ENCODE measurements at regions of chr17 and their contacts with region 1.

Region 1: DNA sequence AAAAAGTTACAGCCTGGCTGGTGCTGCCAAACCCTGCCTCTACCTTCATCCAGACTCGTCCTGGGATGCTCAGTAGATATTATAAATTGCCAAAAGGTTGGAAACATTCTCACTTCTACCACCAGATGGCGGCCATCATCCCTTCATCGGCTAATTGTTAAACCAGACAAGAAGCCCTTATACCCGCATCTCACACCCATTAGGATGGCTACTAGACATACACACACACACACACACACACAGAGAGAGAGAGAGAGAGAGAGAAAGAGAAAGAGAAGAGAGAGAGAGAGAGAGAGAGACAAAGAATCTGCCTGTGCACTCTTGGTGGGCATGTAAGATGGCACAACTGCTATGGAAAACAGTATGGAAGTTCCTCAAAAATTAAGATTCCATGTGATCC is 15.0 kb upstream of the SCIMP start:
- DNase-seq: peak; percentile 65 to 73 (median 67)
- H3K4me3 ChIP-seq: no peak overlapping the region
- H3K4me3 Mint-ChIP-seq: peak overlapping the region in 1 of 8 donors; percentile 8
- H3K27ac ChIP-seq: no peak overlapping the region
- H3K27ac Mint-ChIP-seq: peak overlapping the region in 3 of 7 donors; percentile 64 to 94 (median 71)
- H3K4me1 ChIP-seq: peaks cover 7% of the 10 kb centered on the region
- H3K4me1 Mint-ChIP-seq: peaks cover 5 to 8% (median 6%) of the 10 kb centered on the region in 4 donors
- H3K27me3 ChIP-seq: no peaks in the 10 kb centered on the region
- H3K27me3 Mint-ChIP-seq: peaks cover 2% of the 10 kb centered on the region in 2 donors

Region 2: DNA sequence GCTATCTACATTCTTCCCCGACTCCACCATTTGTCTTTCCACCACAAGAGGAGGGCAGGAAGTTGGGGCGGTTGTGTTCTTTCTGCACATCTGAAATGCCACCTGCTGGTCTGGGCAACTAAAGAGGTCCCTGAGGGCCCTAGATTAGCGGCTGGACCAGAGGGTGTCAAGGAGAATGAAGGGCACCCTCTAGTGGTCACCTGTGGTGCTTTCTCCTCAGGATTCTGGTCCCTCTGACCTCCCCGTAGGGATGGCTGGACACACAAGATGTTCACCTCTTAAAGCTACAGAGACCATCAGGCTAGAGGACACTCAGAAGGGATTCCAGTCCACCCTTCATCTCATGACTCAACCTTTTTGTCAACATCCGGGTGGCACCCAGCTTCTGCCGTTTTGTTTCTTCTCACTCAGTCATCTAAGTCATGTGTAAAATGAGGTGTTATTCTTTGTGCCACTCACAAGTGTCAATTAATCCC is 12.0 kb before region 1 on chr17:
- CTCF ChIA-PET with region 1: interaction called, 13 read pairs
- POLR2A ChIA-PET with region 1: interaction called, 3 read pairs
- intact Hi-C with region 1: no loop called
- DNase-seq: peak in 1 of 5 donors; percentile 14
- H3K4me3 ChIP-seq: no peak overlapping the region
- H3K4me3 Mint-ChIP-seq: peak overlapping the region in 1 of 8 donors; percentile 5
- H3K27ac ChIP-seq: no peak overlapping the region
- H3K27ac Mint-ChIP-seq: peak overlapping the region in 5 of 7 donors; percentile 1 to 64 (median 46)
- H3K4me1 ChIP-seq: peaks cover 25% of the 10 kb centered on the region
- H3K4me1 Mint-ChIP-seq: peaks cover 12 to 38% (median 28%) of the 10 kb centered on the region in 4 donors
- H3K27me3 ChIP-seq: no peaks in the 10 kb centered on the region
- H3K27me3 Mint-ChIP-seq: no peaks in the 10 kb centered on the region

Region 3: GRCh38 chr17:5304636-5305035 is 55.0 kb after region 1 on chr17:
- CTCF ChIA-PET with region 1: interaction called, 7 read pairs
- POLR2A ChIA-PET with region 1: no interaction called
- intact Hi-C with region 1: loop called (anchors 1 kb)
- DNase-seq: no peak
- H3K4me3 ChIP-seq: no peak overlapping the region
- H3K4me3 Mint-ChIP-seq: no peak overlapping the region
- H3K27ac ChIP-seq: no peak overlapping the region
- H3K27ac Mint-ChIP-seq: no peak overlapping the region
- H3K4me1 ChIP-seq: peaks cover 12% of the 10 kb centered on the region
- H3K4me1 Mint-ChIP-seq: peaks cover 25 to 47% (median 33%) of the 10 kb centered on the region in 4 donors
- H3K27me3 ChIP-seq: no peaks in the 10 kb centered on the region
- H3K27me3 Mint-ChIP-seq: no peaks in the 10 kb centered on the region

Region 4: DNA sequence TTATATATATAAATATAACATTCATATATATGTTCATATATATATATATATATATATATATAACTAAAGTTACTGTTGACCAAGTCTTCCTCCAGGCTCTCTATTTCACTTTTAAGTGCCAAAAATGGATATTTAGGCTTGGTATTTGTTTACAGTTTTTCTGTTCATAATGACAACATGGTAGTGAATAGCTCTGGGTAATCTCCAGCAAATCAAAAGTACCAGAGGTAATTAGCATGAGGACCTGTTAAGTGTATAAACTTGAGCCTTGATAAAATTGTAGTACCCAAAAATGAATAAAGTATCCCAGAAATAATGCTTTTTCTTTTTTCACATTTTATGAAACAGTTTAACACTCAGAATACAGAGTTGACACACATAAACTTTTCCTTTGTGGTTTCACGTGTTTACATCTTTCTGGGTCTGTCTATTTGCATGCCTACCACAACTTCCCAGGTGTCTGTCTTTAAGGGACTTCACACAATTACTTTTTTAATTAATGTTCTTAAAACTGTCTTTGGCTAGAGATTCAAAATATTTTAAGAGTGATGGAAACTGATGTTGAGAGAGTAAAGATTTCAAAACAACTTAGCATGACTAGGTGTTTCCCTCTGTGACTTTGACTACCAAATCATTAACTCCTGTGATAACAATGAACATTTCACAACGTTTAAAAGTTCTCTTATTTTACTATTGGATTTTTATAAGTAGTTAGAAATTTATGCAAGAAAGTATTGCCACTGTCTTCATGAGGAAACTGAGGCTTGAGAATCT is 80.4 kb after region 1 on chr17:
- CTCF ChIA-PET with region 1: no interaction called
- POLR2A ChIA-PET with region 1: no interaction called
- intact Hi-C with region 1: no loop called
- DNase-seq: peak in 4 of 5 donors; percentile 5 to 22 (median 10)
- H3K4me3 ChIP-seq: no peak overlapping the region
- H3K4me3 Mint-ChIP-seq: peak overlapping the region in 5 of 8 donors; percentile 36 to 56 (median 43)
- H3K27ac ChIP-seq: no peak overlapping the region
- H3K27ac Mint-ChIP-seq: peak overlapping the region in 6 of 7 donors; percentile 38 to 82 (median 54)
- H3K4me1 ChIP-seq: peaks cover 26% of the 10 kb centered on the region
- H3K4me1 Mint-ChIP-seq: peaks cover 26 to 41% (median 35%) of the 10 kb centered on the region in 4 donors
- H3K27me3 ChIP-seq: no peaks in the 10 kb centered on the region
- H3K27me3 Mint-ChIP-seq: no peaks in the 10 kb centered on the region

Region 5: GRCh38 chr17:6427279-6427781 is 1177.7 kb after region 1 on chr17:
- CTCF ChIA-PET with region 1: no interaction called
- POLR2A ChIA-PET with region 1: no interaction called
- intact Hi-C with region 1: loop called (anchors 2 kb)
- DNase-seq: peak; percentile 55 to 74 (median 64)
- H3K4me3 ChIP-seq: no peak overlapping the region
- H3K4me3 Mint-ChIP-seq: peak overlapping the region in 7 of 8 donors; percentile 40 to 79 (median 63)
- H3K27ac ChIP-seq: no peak overlapping the region
- H3K27ac Mint-ChIP-seq: peak overlapping the region; percentile 32 to 80 (median 54)
- H3K4me1 ChIP-seq: peaks cover 21% of the 10 kb centered on the region
- H3K4me1 Mint-ChIP-seq: peaks cover 10 to 22% (median 13%) of the 10 kb centered on the region in 4 donors
- H3K27me3 ChIP-seq: no peaks in the 10 kb centered on the region
- H3K27me3 Mint-ChIP-seq: peaks cover 0 to 5% of the 10 kb centered on the region in 2 donors

Measured in CD4-positive, alpha-beta memory T cell (primary cell).